ENCODE measurements at regions of chr1 and their contacts with region 1.

Region 1: DNA sequence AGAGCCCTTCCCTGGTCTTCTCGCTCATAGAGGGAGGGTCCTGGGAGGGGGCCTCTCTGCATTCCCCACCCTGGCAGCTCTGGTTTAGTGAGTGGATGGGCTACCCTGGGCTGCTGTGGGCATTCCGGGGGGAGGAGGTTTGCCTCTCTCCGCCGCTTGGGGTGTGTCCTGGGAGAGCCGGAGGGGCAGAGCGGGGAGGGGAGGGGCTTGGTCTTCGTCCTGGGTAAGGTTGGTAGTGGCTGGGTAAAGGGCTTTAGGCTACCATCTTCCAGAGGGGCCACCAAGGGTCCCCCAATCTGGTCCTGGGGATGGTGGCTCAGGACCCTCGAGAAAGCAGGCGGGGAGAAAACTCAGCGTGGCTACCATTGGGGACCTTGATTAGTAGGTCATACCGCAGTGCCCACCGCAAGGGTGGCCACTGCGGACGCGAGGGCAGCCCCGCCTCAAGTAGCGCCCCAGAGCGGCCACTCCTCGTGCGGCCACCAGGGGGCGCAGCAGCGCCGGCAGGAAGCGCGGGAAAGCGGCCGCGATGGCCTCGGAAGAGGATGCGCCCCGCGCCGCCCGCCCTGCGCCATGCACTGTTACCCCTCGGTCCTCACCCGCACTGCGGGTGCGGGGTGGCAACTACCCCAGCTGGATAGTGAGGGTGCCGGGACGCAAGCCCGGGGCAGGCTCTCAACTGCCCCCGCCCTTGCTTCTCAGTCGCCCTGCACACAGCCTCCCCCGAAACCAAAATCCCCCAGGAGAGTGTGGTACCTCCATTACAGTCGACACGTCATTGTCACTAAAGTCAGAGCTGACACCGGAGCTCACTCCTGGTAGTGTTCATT is 44.1 kb upstream of the SLC25A33 start:
- DNase-seq: peak in 7 of 10 donors; percentile 22 to 93 (median 40)

Region 2: GRCh38 chr1:9110669-9111356 is 384.3 kb before region 1 on chr1:
- intact Hi-C with region 1: loop called (anchors 1 kb)
- DNase-seq: peak; percentile 79 to 98 (median 92)

Region 3: GRCh38 chr1:9267352-9267686 is 227.8 kb before region 1 on chr1:
- intact Hi-C with region 1: loop called (anchors 1 kb)
- DNase-seq: no peak

Region 4: DNA sequence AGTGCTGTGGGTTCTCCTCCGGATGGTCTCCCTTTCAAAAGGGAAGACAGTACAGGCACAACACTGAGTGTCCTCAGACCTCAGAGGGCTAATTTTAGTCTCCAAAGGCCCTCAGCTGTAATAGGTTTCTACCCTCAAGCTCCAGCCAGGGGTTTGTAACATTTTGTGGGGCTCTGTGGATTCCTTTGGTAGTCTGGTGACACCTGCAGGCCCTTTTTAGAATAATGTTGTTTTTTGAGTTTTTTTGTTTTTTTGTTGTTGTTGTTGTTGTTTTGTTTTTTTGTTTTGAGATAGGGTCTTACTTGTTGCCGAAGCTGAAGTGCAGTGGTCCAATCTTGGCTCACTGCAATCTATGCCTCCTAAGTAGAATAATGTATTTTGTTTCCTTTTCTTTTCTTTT is 78.6 kb after region 1 on chr1:
- intact Hi-C with region 1: loop called (anchors 1 kb)
- DNase-seq: no peak